RWPE1 (cell line): ENCODE measurements at regions of chr11 and their contacts with region 1.

Region 1: GRCh38 chr11:77127232-77127911 is 674 bp upstream of the MYO7A start:
- DNase-seq: peak; percentile 50
- H3K27ac ChIP-seq: no peak overlapping the region
- CTCF ChIP-seq: peak; percentile 97

Region 2: DNA sequence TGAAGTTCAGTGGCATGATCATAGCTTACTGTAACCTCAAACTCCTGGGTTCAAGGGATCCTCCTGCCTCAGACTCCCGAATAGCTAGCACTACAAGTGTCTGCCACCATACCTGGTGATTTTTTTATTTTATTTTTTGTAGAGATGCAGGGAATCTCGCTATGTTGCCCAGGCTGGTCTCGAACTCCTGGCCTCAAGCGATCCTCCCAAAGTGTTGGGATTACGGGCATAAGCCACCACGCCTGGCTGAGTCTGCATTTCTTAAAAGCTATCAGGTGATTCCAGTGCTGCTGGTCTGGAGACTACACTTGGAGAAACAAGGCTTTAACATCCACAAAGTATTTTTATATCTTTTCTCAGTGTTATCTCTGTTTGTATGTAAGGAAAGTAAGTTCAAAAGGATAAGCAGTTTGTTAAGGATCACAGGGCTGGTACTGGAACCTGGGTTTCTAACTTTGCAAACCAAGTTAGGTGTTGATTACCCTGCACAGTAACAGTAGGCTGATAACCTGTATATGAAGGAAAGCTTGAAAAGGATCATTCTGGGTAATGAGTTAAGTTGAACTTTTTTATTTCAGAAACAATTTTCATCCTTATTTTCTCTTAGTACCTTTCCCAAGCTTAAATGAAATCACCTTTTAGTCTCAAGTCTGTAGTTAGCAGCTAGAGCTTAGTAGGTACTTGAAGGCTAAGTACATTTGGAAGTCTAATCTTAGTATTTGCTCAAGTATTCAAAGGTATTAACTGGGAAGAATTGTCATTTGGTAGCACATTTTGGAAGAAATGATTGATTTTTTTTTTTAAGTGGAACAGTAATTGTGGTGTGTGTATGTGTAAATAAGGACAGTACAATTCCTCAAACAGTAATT is 254.2 kb before region 1 on chr11:
- CTCF ChIA-PET with region 1: no interaction called
- POLR2A ChIA-PET with region 1: no interaction called
- DNase-seq: no peak
- H3K27ac ChIP-seq: no peak overlapping the region
- CTCF ChIP-seq: no peak

Region 3: GRCh38 chr11:77009533-77010160 is 117.7 kb before region 1 on chr11:
- CTCF ChIA-PET with region 1: no interaction called
- POLR2A ChIA-PET with region 1: no interaction called
- DNase-seq: no peak
- H3K27ac ChIP-seq: no peak overlapping the region
- CTCF ChIP-seq: no peak

Region 4: GRCh38 chr11:77047007-77047927 is 80.1 kb before region 1 on chr11:
- CTCF ChIA-PET with region 1: no interaction called
- POLR2A ChIA-PET with region 1: no interaction called
- DNase-seq: peak; percentile 73
- H3K27ac ChIP-seq: no peak overlapping the region
- CTCF ChIP-seq: peak; percentile 49

Region 5: DNA sequence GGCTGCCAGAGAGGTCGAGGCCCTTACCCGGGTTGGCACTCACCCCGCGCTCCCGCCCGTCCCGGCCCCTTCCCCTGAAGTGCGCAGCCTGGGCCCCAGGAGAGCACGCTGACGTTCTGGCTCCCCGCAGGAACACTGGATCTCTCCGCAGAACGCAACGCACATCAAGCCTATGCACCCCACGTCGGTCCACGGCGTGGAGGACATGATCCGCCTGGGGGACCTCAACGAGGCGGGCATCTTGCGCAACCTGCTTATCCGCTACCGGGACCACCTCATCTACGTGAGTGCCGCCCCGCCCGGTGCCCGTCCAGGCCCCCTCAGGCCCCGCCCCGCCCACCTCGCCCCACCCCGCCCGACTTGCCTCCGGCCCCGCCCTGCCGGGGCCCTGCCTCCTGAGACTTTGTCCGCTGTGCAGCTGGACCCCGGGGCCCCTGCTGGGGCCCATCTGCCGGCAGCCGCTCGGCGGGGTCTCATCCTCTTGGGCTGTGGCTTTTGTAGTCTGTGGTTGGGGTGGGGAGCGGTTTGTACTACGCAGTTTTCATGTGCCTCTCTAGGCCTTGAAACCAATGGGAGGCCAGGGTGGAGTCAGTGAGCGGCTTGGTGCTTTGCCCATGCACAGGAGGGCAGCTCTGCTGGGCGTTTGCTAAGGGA is 20.4 kb after region 1 on chr11:
- CTCF ChIA-PET with region 1: interaction called, 10 read pairs
- POLR2A ChIA-PET with region 1: no interaction called
- DNase-seq: peak; percentile 22
- H3K27ac ChIP-seq: no peak overlapping the region
- CTCF ChIP-seq: no peak

Region 6: DNA sequence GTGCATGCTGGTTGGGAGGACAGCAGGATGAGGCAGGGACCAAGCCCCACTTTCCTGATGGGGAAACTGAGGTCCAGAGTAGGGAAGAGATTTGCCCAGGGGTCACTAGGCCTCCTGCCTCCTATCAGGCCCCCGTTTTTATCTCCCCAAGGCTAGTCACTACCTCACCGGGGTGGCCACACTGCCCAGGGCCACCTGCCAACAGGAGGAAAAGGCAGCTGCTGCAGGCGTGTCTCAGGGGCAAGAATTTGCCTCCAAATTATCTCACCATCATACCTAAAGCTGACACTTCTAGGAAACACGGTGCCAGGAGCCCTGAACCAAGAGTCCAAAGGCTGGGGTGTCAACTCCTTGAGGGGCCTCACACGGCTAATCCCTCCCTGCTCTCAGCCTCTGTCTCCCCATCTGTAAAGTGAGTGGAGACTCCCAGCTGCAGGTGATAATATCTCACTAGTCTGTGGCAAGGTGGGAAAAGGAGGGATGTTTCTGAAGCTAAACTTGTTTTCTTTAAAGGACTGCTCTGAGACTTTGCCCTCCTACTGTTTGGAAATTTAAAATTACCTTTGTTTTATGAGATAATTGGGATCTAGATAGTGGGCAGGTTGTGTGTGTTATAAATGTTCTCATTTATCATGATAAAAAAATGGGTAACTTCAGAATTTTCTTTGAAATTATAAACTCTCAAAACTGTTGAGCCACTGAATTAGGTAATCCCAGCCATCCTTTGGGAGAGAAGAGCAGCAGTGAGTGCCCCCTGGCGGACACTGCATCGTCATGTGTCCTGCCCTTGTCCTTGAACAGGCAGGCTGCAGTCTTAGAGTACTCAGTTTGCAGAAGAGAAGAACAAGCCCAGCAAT is 60.6 kb after region 1 on chr11:
- CTCF ChIA-PET with region 1: interaction called, 33 read pairs
- POLR2A ChIA-PET with region 1: no interaction called
- DNase-seq: peak; percentile 85
- H3K27ac ChIP-seq: no peak overlapping the region
- CTCF ChIP-seq: peak; percentile 85

Region 7: GRCh38 chr11:77195171-77195751 is 67.9 kb after region 1 on chr11:
- CTCF ChIA-PET with region 1: interaction called, 33 read pairs
- POLR2A ChIA-PET with region 1: no interaction called
- DNase-seq: no peak
- H3K27ac ChIP-seq: no peak overlapping the region
- CTCF ChIP-seq: no peak

Region 8: GRCh38 chr11:77340501-77340900 is 213.1 kb after region 1 on chr11:
- CTCF ChIA-PET with region 1: no interaction called
- POLR2A ChIA-PET with region 1: no interaction called
- DNase-seq: no peak
- H3K27ac ChIP-seq: no peak overlapping the region
- CTCF ChIP-seq: no peak

Region 9: DNA sequence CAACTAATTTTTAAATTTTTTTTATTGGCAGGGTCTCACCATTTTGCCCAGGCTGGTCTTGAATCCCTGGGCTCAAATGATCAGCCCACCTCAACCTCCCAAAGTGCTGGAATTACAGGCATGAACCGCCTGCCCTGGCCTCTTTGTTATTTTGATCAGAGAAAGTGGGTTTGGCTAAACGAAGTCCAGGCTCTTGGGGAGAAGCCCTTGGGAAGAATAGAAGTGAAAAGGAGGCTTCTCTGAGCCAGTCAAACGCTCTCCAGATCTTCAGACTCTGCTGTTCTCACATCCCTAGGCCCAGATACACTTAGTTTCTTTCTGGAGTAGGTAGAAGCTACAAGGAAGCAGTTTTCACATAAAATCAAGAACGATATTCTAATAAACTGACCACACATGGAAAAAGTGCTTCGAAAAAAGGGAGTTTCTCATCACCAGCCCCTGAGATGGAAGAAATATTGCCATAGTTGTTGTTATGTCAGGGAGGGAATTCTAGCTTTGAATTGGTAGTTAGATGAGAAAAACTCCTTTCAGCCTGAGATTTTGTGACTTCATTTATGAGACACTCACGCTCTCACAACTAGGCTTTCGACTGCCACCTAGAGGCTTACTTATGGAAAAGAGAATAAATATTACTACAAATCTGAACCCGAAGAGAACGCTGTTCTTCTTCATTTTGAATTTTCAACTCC is 420.6 kb after region 1 on chr11:
- CTCF ChIA-PET with region 1: interaction called, 14 read pairs
- POLR2A ChIA-PET with region 1: no interaction called
- DNase-seq: peak; percentile 41
- H3K27ac ChIP-seq: no peak overlapping the region
- CTCF ChIP-seq: peak; percentile 67

Region 10: DNA sequence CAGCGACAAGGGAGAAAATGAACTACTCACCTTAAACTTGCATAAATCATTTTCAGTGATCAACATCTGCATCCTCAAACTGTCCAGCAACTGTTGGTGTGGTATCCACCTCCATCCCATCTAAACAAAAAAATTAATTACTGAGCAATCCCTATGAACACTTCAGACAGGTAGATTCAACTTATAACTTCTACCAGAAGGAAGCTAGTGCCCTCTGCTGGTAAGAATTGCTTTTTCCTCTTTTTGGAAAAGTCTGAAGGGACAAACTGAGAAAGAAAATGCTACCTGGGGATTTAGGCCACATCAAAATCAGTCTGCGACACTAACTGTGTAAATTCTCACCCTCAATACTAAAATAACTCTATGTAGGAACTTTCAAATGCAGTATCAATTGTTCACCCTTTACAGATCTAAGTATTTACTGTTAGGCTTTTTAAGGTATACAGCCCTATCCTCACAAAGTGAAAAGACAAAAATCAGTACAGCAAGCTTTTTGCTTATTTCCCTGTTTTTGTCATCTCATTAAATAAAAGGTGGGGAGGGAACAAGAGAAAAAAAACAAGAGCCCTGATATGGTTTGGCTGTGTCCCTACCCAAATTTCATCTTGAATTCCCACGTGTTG is 492.3 kb after region 1 on chr11:
- CTCF ChIA-PET with region 1: interaction called, 13 read pairs
- POLR2A ChIA-PET with region 1: no interaction called
- DNase-seq: no peak
- H3K27ac ChIP-seq: no peak overlapping the region
- CTCF ChIP-seq: peak; percentile 79